ENCODE measurements at regions of chr11 and their contacts with region 1.

Region 1: DNA sequence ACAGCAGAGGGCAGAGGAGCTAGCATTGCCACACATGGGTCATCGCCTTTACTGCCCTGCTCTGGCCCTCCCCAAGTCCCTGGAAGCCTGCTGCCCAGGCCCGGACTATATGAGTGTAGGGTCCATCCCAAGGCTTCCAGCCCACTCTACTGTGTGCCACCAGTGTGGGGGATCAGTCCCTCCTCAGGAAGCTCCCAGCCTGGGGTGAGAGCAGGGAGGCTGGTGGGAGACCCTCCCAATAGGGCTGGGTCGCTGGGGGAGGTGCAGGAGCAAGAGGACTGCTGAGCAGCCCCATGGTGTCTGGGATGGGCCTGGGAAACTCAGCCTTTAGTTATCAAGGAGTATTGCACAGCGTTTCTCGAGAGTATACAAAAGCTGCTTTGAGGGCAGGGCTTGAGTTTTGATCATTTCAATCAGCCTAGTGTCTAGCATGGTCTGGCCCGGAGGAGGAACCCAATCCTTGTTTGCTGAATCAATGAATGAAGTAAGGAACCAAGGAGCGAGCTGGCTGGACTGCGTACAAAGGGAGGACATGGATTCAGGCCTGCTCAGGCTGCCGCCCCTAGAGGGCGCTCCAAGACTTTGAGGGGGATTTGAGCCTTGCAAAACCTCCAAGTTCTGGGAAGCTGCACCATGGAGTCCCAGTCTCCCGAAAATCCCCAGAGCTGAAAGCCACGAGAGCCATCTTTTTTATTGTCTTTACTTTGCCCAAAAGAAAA is 89.0 kb upstream of the PARVA start:
- DNase-seq: peak; percentile 95
- ATAC-seq: peak; percentile 69
- H3K4me3 Mint-ChIP-seq: no peak overlapping the region
- H3K27ac Mint-ChIP-seq: no peak overlapping the region
- H3K4me1 Mint-ChIP-seq: peaks cover 15% of the 10 kb centered on the region
- H3K27me3 Mint-ChIP-seq: no peaks in the 10 kb centered on the region
- CTCF ChIP-seq: peak; percentile 89

Region 2: GRCh38 chr11:12043959-12044819 is 244.2 kb before region 1 on chr11:
- CTCF ChIA-PET with region 1: interaction called, 47 read pairs
- POLR2A ChIA-PET with region 1: interaction called, 4 read pairs
- DNase-seq: peak; percentile 77
- ATAC-seq: peak; percentile 84
- H3K4me3 Mint-ChIP-seq: no peak overlapping the region
- H3K27ac Mint-ChIP-seq: no peak overlapping the region
- H3K4me1 Mint-ChIP-seq: peaks cover 9% of the 10 kb centered on the region
- H3K27me3 Mint-ChIP-seq: peaks cover 2% of the 10 kb centered on the region; the same call in 1 of the 2 replicates
- CTCF ChIP-seq: peak; percentile 78

Region 3: DNA sequence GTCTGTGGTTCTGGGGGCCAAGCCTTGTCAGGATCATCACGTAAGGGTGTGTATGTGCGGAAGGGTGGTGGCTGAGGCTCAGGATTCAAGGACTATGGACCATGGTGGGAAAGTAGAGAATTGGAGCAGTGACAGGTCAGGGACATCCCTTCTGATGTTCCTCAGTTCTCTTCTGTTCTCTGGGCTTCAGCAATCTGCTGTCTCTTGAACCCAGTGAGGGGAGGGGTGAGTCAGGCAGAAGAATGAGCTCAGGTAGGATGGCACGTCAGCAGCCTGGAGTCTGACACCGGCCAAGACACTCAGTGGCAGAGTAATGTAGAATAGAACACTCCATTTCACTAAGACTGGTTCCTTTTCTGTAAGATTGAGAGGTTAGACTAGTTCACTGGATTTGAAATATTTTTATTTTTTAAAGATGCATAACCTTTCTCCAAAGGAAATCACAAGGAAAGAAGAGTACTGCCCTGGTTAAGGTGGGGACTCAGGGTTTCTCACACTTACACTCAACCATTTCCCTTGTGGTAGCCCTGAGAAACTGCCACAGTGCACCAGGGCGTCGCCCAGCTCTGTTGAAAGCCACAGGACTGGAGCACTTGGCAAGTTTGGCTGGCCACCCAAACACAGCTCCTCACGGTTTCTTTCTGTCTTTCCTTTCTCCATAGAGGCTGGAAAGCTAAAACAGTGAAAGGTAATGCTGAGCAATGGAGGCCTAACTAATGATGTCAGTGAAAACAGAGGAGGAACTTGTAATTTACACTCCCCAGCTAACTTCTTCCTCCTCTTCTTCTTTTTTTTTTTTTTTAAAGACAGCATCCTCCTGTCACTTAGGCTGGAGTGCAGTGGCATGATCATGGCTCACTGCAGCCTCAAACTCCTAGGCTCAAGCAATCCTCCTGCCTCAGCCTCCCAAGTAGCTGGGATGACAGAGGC is 201.0 kb before region 1 on chr11:
- CTCF ChIA-PET with region 1: interaction called, 10 read pairs
- POLR2A ChIA-PET with region 1: no interaction called
- DNase-seq: no peak
- ATAC-seq: peak; percentile 50; the same call in 1 of the 2 replicates
- H3K4me3 Mint-ChIP-seq: no peak overlapping the region
- H3K27ac Mint-ChIP-seq: no peak overlapping the region
- H3K4me1 Mint-ChIP-seq: peaks cover 17% of the 10 kb centered on the region
- H3K27me3 Mint-ChIP-seq: no peaks in the 10 kb centered on the region
- CTCF ChIP-seq: no peak

Region 4: GRCh38 chr11:12167098-12168000 is 121.0 kb before region 1 on chr11:
- CTCF ChIA-PET with region 1: no interaction called
- POLR2A ChIA-PET with region 1: no interaction called
- DNase-seq: no peak
- ATAC-seq: no peak
- H3K4me3 Mint-ChIP-seq: no peak overlapping the region
- H3K27ac Mint-ChIP-seq: no peak overlapping the region
- H3K4me1 Mint-ChIP-seq: peaks cover under 1% of the 10 kb centered on the region
- H3K27me3 Mint-ChIP-seq: no peaks in the 10 kb centered on the region
- CTCF ChIP-seq: no peak

Region 5: GRCh38 chr11:12306830-12307229 is 18.5 kb after region 1 on chr11:
- CTCF ChIA-PET with region 1: interaction called, 10 read pairs
- POLR2A ChIA-PET with region 1: no interaction called
- DNase-seq: no peak
- ATAC-seq: no peak
- H3K4me3 Mint-ChIP-seq: no peak overlapping the region
- H3K27ac Mint-ChIP-seq: no peak overlapping the region
- H3K4me1 Mint-ChIP-seq: 0 out of 2 replicates have a peak, but pooled peaks cover 4% of the 10 kb centered on the region
- H3K27me3 Mint-ChIP-seq: no peaks in the 10 kb centered on the region
- CTCF ChIP-seq: no peak

Region 6: GRCh38 chr11:12331239-12331874 is 43.0 kb after region 1 on chr11:
- CTCF ChIA-PET with region 1: interaction called, 101 read pairs
- POLR2A ChIA-PET with region 1: interaction called, 3 read pairs
- DNase-seq: peak; percentile 85
- ATAC-seq: peak; percentile 91
- H3K4me3 Mint-ChIP-seq: peak overlapping the region; percentile 22
- H3K27ac Mint-ChIP-seq: no peak overlapping the region
- H3K4me1 Mint-ChIP-seq: peaks cover 12% of the 10 kb centered on the region
- H3K27me3 Mint-ChIP-seq: no peaks in the 10 kb centered on the region; the same call in 1 of the 2 replicates
- CTCF ChIP-seq: peak; percentile 48

Region 7: DNA sequence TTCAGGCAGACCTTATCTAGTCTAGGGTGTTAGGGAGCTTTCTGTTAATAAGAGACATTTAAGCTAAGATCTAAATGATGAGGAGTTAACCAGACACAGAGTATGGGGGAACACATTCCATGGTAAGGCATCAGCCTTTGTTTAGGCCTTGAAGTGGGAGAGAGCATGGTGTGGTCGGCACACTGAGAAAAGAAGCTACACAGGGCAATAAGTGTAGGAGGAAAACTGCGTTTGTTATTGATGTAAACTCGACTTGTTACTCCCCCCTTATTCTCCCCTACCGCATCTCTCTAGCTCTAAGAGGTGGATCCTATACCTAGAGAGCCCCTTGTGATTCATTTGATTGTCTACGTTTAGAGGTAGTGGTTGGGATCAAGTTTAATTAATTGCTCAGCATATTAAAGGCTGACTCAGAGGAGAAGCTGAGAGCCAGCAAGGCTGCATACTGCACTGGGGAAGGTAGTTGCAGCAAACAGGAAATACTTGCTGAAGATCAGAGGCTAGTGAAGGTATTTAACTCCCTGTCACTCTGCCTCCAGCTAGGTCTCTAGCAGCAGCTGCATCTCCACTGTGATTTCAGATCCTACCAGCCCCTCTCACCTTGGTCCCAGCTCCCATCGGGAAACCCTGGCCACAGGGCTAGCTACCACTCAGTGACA is 299.1 kb after region 1 on chr11:
- CTCF ChIA-PET with region 1: interaction called, 11 read pairs
- POLR2A ChIA-PET with region 1: no interaction called
- DNase-seq: no peak
- ATAC-seq: peak; percentile 95
- H3K4me3 Mint-ChIP-seq: no peak overlapping the region
- H3K27ac Mint-ChIP-seq: no peak overlapping the region
- H3K4me1 Mint-ChIP-seq: peaks cover 13% of the 10 kb centered on the region
- H3K27me3 Mint-ChIP-seq: peaks cover 34% of the 10 kb centered on the region
- CTCF ChIP-seq: no peak

Region 8: GRCh38 chr11:12914400-12914912 is 626.1 kb after region 1 on chr11:
- CTCF ChIA-PET with region 1: interaction called, 25 read pairs
- POLR2A ChIA-PET with region 1: no interaction called
- DNase-seq: peak; percentile 88
- ATAC-seq: peak; percentile 98
- H3K4me3 Mint-ChIP-seq: peak overlapping the region; percentile 55
- H3K27ac Mint-ChIP-seq: peak overlapping the region; percentile 99
- H3K4me1 Mint-ChIP-seq: peaks cover 59% of the 10 kb centered on the region
- H3K27me3 Mint-ChIP-seq: no peaks in the 10 kb centered on the region
- CTCF ChIP-seq: peak; percentile 62